T-cell (primary cell): ENCODE measurements at regions of chr5 and their contacts with region 1.

Region 1: GRCh38 chr5:169433221-169433651 is 132.3 kb upstream of the SLIT3 start:
- DNase-seq: no peak
- ATAC-seq: no peak
- H3K4me3 ChIP-seq: no peak overlapping the region
- H3K4me3 Mint-ChIP-seq: no peak overlapping the region
- H3K27ac ChIP-seq: no peak overlapping the region
- H3K27ac Mint-ChIP-seq: no peak overlapping the region
- H3K4me1 ChIP-seq: no peaks in the 10 kb centered on the region
- H3K4me1 Mint-ChIP-seq: no peaks in the 10 kb centered on the region
- H3K27me3 ChIP-seq: peaks cover 3% of the 10 kb centered on the region in 2 experiments
- H3K27me3 Mint-ChIP-seq: peaks cover 7 to 24% of the 10 kb centered on the region in 2 donors

Region 2: DNA sequence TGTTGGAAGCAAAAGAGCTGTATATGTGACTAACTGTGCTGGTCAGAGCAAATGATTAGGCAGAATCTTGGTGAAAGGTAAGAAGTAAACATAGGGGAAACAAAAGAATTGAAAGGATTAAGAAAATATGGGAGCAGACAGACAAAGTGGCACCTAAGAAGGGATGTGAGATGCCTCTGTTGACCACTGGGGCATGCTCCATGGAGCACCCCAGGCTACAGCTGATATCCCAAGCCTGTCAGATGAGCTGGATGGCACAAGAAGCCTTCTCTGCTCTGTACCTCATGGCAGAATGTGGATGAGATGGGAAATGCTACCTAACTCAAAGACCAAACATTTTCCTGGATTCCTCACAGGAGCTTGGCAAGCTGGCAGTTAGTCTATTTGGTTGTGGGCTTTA is 43.0 kb before region 1 on chr5:
- CTCF ChIA-PET with region 1: no interaction called
- POLR2A ChIA-PET with region 1: interaction called in 1 of 2 experiments, 10 read pairs
- DNase-seq: no peak
- ATAC-seq: no peak
- H3K4me3 ChIP-seq: no peak overlapping the region
- H3K4me3 Mint-ChIP-seq: no peak overlapping the region
- H3K27ac ChIP-seq: no peak overlapping the region
- H3K27ac Mint-ChIP-seq: no peak overlapping the region
- H3K4me1 ChIP-seq: no peaks in the 10 kb centered on the region
- H3K4me1 Mint-ChIP-seq: no peaks in the 10 kb centered on the region
- H3K27me3 ChIP-seq: no peaks in the 10 kb centered on the region
- H3K27me3 Mint-ChIP-seq: peaks cover 7 to 11% of the 10 kb centered on the region in 2 donors

Region 3: DNA sequence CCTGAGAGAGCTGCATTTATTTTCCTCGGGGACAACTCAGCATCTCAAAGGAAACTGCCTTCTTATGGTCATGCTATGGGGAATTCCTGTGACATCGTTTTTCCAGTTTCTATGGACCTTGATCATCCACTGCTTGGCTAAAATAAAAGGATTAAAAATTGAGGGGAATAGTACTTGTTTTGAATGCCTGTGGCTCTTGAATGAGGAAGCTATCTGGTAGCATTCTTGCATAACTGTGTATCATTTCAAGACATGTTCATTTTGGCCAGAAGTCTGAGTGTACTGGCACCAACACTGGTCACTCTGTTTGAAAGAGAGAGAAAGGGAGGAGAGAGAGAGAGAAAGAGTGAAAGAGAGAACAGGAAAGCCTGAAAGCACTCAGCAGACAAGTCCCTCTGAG is 320.6 kb after region 1 on chr5:
- CTCF ChIA-PET with region 1: no interaction called
- POLR2A ChIA-PET with region 1: no interaction called
- DNase-seq: no peak
- ATAC-seq: no peak
- H3K4me3 ChIP-seq: no peak overlapping the region
- H3K4me3 Mint-ChIP-seq: no peak overlapping the region
- H3K27ac ChIP-seq: no peak overlapping the region
- H3K27ac Mint-ChIP-seq: no peak overlapping the region
- H3K4me1 ChIP-seq: no peaks in the 10 kb centered on the region
- H3K4me1 Mint-ChIP-seq: no peaks in the 10 kb centered on the region
- H3K27me3 ChIP-seq: no peaks in the 10 kb centered on the region
- H3K27me3 Mint-ChIP-seq: no peaks in the 10 kb centered on the region